ENCODE measurements at regions of chr17 and their contacts with region 1.

Region 1: GRCh38 chr17:1505586-1505985 is 10.8 kb downstream of the INPP5K start:
- DNase-seq: no peak
- ATAC-seq: peak in 3 of 4 donors; percentile 6 to 43 (median 39)
- H3K4me3 ChIP-seq: no peak overlapping the region
- H3K27ac ChIP-seq: peak overlapping the region in 8 of 12 donors; percentile 15 to 75 (median 46)
- H3K4me1 ChIP-seq: peaks cover 1 to 67% (median 29%) of the 10 kb centered on the region in 12 donors
- H3K27me3 ChIP-seq: no peaks in the 10 kb centered on the region
- CTCF ChIP-seq: no peak
- POLR2A ChIP-seq: no peak

Region 2: DNA sequence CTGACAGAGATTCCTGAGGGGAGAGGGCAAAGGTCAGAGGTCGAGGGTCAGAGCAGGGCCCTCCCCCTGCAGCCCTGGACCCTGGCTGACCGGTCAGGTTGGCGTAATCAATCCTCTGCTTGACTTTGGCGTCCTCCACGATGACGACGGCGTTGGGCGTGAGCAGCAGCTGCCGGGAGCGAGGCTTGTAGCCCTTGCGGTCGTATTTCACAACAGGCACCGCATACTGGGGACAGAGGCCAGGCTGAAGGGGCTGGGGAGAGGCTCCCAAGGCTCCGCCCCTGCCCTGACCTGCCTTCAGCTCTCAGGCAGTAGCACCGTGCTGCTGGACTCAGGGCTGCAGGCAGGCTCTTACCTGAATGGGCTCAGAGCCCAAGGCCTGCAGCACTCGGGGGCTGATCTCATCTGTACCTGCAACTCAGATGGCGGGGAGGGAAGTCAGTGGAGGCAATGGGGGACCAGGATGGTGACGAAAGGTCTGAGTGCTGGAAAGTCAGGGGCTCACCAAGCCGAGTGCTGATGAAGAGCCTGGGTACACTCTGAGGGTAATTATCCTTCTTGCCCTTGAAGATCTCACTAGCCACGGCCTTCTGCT is 37.6 kb before region 1 on chr17:
- intact Hi-C with region 1: no loop called
- DNase-seq: no peak
- ATAC-seq: no peak
- H3K4me3 ChIP-seq: no peak overlapping the region
- H3K27ac ChIP-seq: no peak overlapping the region
- H3K4me1 ChIP-seq: peaks cover 0 to 19% (median 0%) of the 10 kb centered on the region in 12 donors
- H3K27me3 ChIP-seq: no peaks in the 10 kb centered on the region
- CTCF ChIP-seq: no peak
- POLR2A ChIP-seq: no peak

Region 3: GRCh38 chr17:1495265-1495989 is 10.2 kb before region 1 on chr17:
- intact Hi-C with region 1: loop called in 3 of 10 experiments (anchors 1 to 2 kb)
- DNase-seq: peak in 4 of 5 donors; percentile 63 to 85 (median 77)
- ATAC-seq: peak; percentile 52 to 68 (median 62)
- H3K4me3 ChIP-seq: peak overlapping the region in 1 of 12 donors; percentile 10
- H3K27ac ChIP-seq: peak overlapping the region; percentile 38 to 100 (median 99)
- H3K4me1 ChIP-seq: peaks cover 9 to 76% (median 55%) of the 10 kb centered on the region in 12 donors
- H3K27me3 ChIP-seq: no peaks in the 10 kb centered on the region
- CTCF ChIP-seq: no peak
- POLR2A ChIP-seq: no peak